Prostate gland (tissue), 2 donors: ENCODE measurements at regions of chr2 and their contacts with region 1.

Region 1: GRCh38 chr2:37389989-37390765 is 45.7 kb downstream of the QPCT start:
- DNase-seq: no peak
- H3K4me3 ChIP-seq: no peak overlapping the region
- H3K27ac ChIP-seq: no peak overlapping the region
- H3K4me1 ChIP-seq: no peaks in the 10 kb centered on the region
- H3K27me3 ChIP-seq: no peaks in the 10 kb centered on the region
- CTCF ChIP-seq: no peak
- POLR2A ChIP-seq: no peak

Region 2: GRCh38 chr2:37350034-37350433 is 40.1 kb before region 1 on chr2:
- intact Hi-C with region 1: no loop called
- DNase-seq: no peak
- H3K4me3 ChIP-seq: no peak overlapping the region
- H3K27ac ChIP-seq: no peak overlapping the region
- H3K4me1 ChIP-seq: no peaks in the 10 kb centered on the region
- H3K27me3 ChIP-seq: no peaks in the 10 kb centered on the region
- CTCF ChIP-seq: no peak
- POLR2A ChIP-seq: no peak

Region 3: GRCh38 chr2:37832590-37833197 is 442.5 kb after region 1 on chr2:
- intact Hi-C with region 1: loop called (anchors 5 kb)
- DNase-seq: peak; percentile 90
- H3K4me3 ChIP-seq: no peak overlapping the region
- H3K27ac ChIP-seq: peak overlapping the region in 1 of 2 donors; percentile 21
- H3K4me1 ChIP-seq: no peaks in the 10 kb centered on the region
- H3K27me3 ChIP-seq: no peaks in the 10 kb centered on the region
- CTCF ChIP-seq: peak; percentile 54 to 94 (median 86)
- POLR2A ChIP-seq: no peak

Region 4: GRCh38 chr2:37877457-37878315 is 487.5 kb after region 1 on chr2:
- intact Hi-C with region 1: loop called (anchors 5 kb)
- DNase-seq: peak; percentile 43
- H3K4me3 ChIP-seq: no peak overlapping the region
- H3K27ac ChIP-seq: no peak overlapping the region
- H3K4me1 ChIP-seq: no peaks in the 10 kb centered on the region
- H3K27me3 ChIP-seq: no peaks in the 10 kb centered on the region
- CTCF ChIP-seq: peak; percentile 47 to 83 (median 80)
- POLR2A ChIP-seq: no peak

Region 5: GRCh38 chr2:37890893-37891495 is 500.8 kb after region 1 on chr2:
- intact Hi-C with region 1: loop called (anchors 5 kb)
- DNase-seq: peak; percentile 44
- H3K4me3 ChIP-seq: no peak overlapping the region
- H3K27ac ChIP-seq: no peak overlapping the region
- H3K4me1 ChIP-seq: no peaks in the 10 kb centered on the region
- H3K27me3 ChIP-seq: no peaks in the 10 kb centered on the region
- CTCF ChIP-seq: peak; percentile 60 to 71 (median 62)
- POLR2A ChIP-seq: no peak

Region 6: GRCh38 chr2:38274286-38275276 is 884.4 kb after region 1 on chr2:
- intact Hi-C with region 1: loop called (anchors 10 kb)
- DNase-seq: peak; percentile 68
- H3K4me3 ChIP-seq: no peak overlapping the region
- H3K27ac ChIP-seq: no peak overlapping the region
- H3K4me1 ChIP-seq: no peaks in the 10 kb centered on the region
- H3K27me3 ChIP-seq: no peaks in the 10 kb centered on the region
- CTCF ChIP-seq: peak; percentile 48 to 90 (median 78)
- POLR2A ChIP-seq: no peak